ENCODE measurements at regions of chr3 and their contacts with region 1.

Region 1: GRCh38 chr3:194315088-194315964 is 35.8 kb downstream of the CPN2 start:
- DNase-seq: peak; percentile 55 to 90 (median 81)
- ATAC-seq: peak; percentile 95
- H3K4me3 ChIP-seq: peak overlapping the region; percentile 65
- H3K4me3 Mint-ChIP-seq: peak overlapping the region; percentile 69 to 92 (median 87)
- H3K27ac ChIP-seq: no peak overlapping the region
- H3K27ac Mint-ChIP-seq: peak overlapping the region in 3 of 9 donors; percentile 19 to 68 (median 27)
- H3K4me1 ChIP-seq: peaks cover 9 to 14% of the 10 kb centered on the region in 2 donors
- H3K4me1 Mint-ChIP-seq: peaks cover 5 to 47% (median 9%) of the 10 kb centered on the region in 7 donors
- H3K27me3 ChIP-seq: peaks cover 0 to 6% of the 10 kb centered on the region in 2 donors
- H3K27me3 Mint-ChIP-seq: peaks cover 0 to 18% (median 16%) of the 10 kb centered on the region in 5 donors

Region 2: GRCh38 chr3:192816351-192816750 is 1499.0 kb before region 1 on chr3:
- CTCF ChIA-PET with region 1: no interaction called
- POLR2A ChIA-PET with region 1: no interaction called
- intact Hi-C with region 1: loop called in 1 of 2 experiments (anchors 10 kb)
- DNase-seq: peak in 5 of 9 donors; percentile 13 to 38 (median 24)
- ATAC-seq: no peak
- H3K4me3 ChIP-seq: no peak overlapping the region
- H3K4me3 Mint-ChIP-seq: no peak overlapping the region
- H3K27ac ChIP-seq: no peak overlapping the region
- H3K27ac Mint-ChIP-seq: peak overlapping the region in 1 of 9 donors; percentile 9
- H3K4me1 ChIP-seq: no peaks in the 10 kb centered on the region
- H3K4me1 Mint-ChIP-seq: peaks cover 0 to 67% (median 4%) of the 10 kb centered on the region in 7 donors
- H3K27me3 ChIP-seq: no peaks in the 10 kb centered on the region
- H3K27me3 Mint-ChIP-seq: peaks cover 0 to 2% (median 0%) of the 10 kb centered on the region in 5 donors

Region 3: DNA sequence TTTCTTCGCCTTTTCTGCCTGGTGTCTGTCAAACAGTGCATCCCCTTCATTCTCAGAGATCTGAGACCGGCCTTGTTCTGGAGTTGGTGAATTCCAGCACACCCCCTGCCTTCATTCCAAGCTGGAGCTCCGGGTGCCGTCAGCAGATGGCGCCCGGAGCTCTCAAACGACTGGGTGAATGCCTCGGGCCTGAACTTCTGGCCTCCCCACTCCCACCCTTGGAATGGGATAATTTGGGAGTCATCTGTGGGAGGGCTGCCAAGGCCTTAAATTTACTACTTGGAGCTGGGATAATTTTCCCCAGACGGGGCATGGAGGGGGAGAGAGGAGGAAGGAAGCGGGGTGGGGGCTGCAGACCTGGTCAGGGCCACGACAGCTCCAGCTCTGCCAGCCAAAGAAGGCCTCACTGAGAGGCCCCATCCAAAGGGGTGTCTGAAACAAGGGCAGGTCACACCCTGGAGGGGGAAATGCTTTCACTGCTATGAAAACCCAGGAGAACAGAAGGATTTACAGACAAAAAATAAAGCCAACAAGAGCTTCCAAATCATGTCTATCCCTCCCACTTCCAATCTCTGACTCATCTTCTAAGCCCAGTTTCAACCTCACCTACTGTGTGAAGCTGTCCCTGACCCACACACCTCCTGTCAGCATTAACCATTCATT is 534.4 kb before region 1 on chr3:
- CTCF ChIA-PET with region 1: interaction called, 19 read pairs
- POLR2A ChIA-PET with region 1: interaction called, 3 read pairs
- intact Hi-C with region 1: loop called (anchors 1 kb)
- DNase-seq: peak in 2 of 9 donors; percentile 4 to 13
- ATAC-seq: no peak
- H3K4me3 ChIP-seq: no peak overlapping the region
- H3K4me3 Mint-ChIP-seq: no peak overlapping the region
- H3K27ac ChIP-seq: no peak overlapping the region
- H3K27ac Mint-ChIP-seq: peak overlapping the region in 1 of 9 donors; percentile 45
- H3K4me1 ChIP-seq: peaks cover 0 to 5% of the 10 kb centered on the region in 2 donors
- H3K4me1 Mint-ChIP-seq: peaks cover 4 to 35% (median 9%) of the 10 kb centered on the region in 7 donors
- H3K27me3 ChIP-seq: peaks cover 0 to 3% of the 10 kb centered on the region in 2 donors
- H3K27me3 Mint-ChIP-seq: peaks cover 21 to 60% (median 37%) of the 10 kb centered on the region in 5 donors

Region 4: GRCh38 chr3:193971261-193971751 is 344.0 kb before region 1 on chr3:
- CTCF ChIA-PET with region 1: no interaction called
- POLR2A ChIA-PET with region 1: no interaction called
- intact Hi-C with region 1: loop called in 1 of 2 experiments (anchors 1 kb)
- DNase-seq: no peak
- ATAC-seq: peak; percentile 86
- H3K4me3 ChIP-seq: no peak overlapping the region
- H3K4me3 Mint-ChIP-seq: peak overlapping the region in 7 of 10 donors; percentile 18 to 67 (median 51)
- H3K27ac ChIP-seq: no peak overlapping the region
- H3K27ac Mint-ChIP-seq: no peak overlapping the region
- H3K4me1 ChIP-seq: peaks cover 0 to 10% of the 10 kb centered on the region in 2 donors
- H3K4me1 Mint-ChIP-seq: peaks cover 0 to 28% (median 20%) of the 10 kb centered on the region in 7 donors
- H3K27me3 ChIP-seq: no peaks in the 10 kb centered on the region
- H3K27me3 Mint-ChIP-seq: peaks cover 6 to 74% (median 24%) of the 10 kb centered on the region in 5 donors

Region 5: GRCh38 chr3:193982258-193982659 is 333.1 kb before region 1 on chr3:
- CTCF ChIA-PET with region 1: no interaction called
- POLR2A ChIA-PET with region 1: no interaction called
- intact Hi-C with region 1: no loop called
- DNase-seq: no peak
- ATAC-seq: no peak
- H3K4me3 ChIP-seq: no peak overlapping the region
- H3K4me3 Mint-ChIP-seq: no peak overlapping the region
- H3K27ac ChIP-seq: no peak overlapping the region
- H3K27ac Mint-ChIP-seq: no peak overlapping the region
- H3K4me1 ChIP-seq: no peaks in the 10 kb centered on the region
- H3K4me1 Mint-ChIP-seq: no peaks in the 10 kb centered on the region
- H3K27me3 ChIP-seq: no peaks in the 10 kb centered on the region
- H3K27me3 Mint-ChIP-seq: peaks cover 0 to 40% (median 5%) of the 10 kb centered on the region in 5 donors

Region 6: DNA sequence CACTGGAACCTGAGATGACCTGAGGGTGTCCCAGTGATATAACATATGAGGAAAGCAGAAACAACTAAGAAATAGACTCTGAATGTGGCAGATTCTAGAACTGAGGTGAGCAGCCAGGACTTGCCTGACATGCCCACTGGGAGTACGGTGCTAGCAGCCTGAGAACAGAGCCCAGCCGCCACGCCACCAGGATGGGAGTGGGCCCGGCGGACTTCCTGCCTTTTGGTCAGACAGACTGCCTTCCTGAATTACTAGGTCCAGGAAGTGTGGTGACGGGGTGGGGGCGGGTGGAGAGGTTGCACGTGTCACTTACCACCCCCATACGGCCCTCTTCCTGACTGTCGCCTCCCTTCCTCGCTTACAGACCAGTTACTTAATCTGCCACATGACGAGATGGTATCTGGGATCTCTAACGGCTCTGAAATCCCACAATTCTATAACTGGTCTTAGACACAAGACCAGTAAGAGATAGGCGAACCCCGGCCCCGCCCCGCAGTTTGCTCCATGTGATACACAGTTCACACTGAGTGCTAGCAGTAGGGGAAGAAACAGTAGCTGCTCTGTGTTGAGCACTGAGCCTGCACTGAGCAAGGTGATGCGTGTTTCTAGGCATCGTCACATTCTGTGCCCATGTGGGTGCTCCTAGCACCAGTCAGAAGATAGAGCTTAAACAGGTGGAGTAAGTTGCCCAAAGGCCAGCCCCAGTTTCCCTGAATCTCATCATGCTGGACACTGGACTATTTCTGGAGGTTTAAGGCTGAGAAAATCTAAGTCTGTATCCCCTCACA is 59.9 kb before region 1 on chr3:
- CTCF ChIA-PET with region 1: interaction called, 5 read pairs
- POLR2A ChIA-PET with region 1: no interaction called
- intact Hi-C with region 1: loop called in 1 of 2 experiments (anchors 2 kb)
- DNase-seq: peak in 7 of 9 donors; percentile 2 to 41 (median 36)
- ATAC-seq: peak; percentile 88
- H3K4me3 ChIP-seq: peak overlapping the region; percentile 42
- H3K4me3 Mint-ChIP-seq: peak overlapping the region; percentile 65 to 88 (median 82)
- H3K27ac ChIP-seq: peak overlapping the region; percentile 56
- H3K27ac Mint-ChIP-seq: peak overlapping the region; percentile 71 to 93 (median 88)
- H3K4me1 ChIP-seq: peaks cover 0 to 6% of the 10 kb centered on the region in 2 donors
- H3K4me1 Mint-ChIP-seq: peaks cover 13 to 37% (median 25%) of the 10 kb centered on the region in 7 donors
- H3K27me3 ChIP-seq: no peaks in the 10 kb centered on the region
- H3K27me3 Mint-ChIP-seq: peaks cover 0 to 7% (median 0%) of the 10 kb centered on the region in 5 donors

Measured in naive thymus-derived CD4-positive, alpha-beta T cell (primary cell).